Psoas muscle (tissue), 8 donors: ENCODE measurements at regions of chr6 and their contacts with region 1.

Region 1: DNA sequence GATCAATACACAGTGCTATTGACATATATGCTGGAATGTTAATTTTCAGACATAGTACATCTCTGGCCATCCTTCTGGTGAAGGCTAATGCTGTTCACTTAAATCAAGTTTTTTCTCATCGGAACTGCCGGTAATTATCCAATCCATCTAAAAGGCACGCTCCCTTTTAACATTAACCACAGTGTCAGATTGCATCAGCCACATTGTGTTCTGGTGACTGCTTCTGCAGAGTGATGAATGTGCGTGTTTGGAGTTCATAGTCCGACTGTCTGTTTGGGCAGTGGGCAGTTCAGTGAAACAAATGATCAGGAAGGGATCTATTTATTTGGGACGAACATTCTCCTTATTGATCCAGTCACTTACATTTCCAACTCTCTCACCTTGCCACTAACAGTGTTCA is 49.5 kb downstream of the SOBP start:
- DNase-seq: no peak
- ATAC-seq: peak; percentile 66 to 85 (median 75)
- H3K4me3 ChIP-seq: peak overlapping the region; percentile 28
- H3K27ac ChIP-seq: peak overlapping the region; percentile 53
- H3K4me1 ChIP-seq: peaks cover 59% of the 10 kb centered on the region
- H3K27me3 ChIP-seq: no peaks in the 10 kb centered on the region
- CTCF ChIP-seq: no peak

Region 2: DNA sequence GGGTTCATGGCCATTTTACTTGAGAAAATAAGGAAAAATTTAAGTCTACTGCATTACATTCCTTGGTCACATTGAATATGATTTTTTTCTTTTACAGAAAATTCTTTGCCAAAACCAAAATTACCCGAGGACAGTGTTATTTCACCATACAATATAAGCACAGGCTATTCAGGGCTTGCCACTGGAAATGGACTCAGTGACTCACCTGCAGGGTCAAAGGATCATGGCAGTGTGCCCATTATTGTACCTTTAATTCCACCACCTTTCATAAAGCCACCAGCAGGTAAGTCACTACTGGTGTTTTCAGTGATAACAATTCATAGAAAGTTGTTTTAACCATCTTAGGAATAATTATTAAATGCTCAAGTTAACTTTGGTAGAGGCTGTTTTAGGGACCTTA is 33.3 kb before region 1 on chr6:
- intact Hi-C with region 1: loop called in 1 of 2 experiments (anchors 2 kb)
- DNase-seq: no peak
- ATAC-seq: no peak
- H3K4me3 ChIP-seq: no peak overlapping the region
- H3K27ac ChIP-seq: no peak overlapping the region
- H3K4me1 ChIP-seq: peaks cover 11% of the 10 kb centered on the region
- H3K27me3 ChIP-seq: no peaks in the 10 kb centered on the region
- CTCF ChIP-seq: no peak

Region 3: DNA sequence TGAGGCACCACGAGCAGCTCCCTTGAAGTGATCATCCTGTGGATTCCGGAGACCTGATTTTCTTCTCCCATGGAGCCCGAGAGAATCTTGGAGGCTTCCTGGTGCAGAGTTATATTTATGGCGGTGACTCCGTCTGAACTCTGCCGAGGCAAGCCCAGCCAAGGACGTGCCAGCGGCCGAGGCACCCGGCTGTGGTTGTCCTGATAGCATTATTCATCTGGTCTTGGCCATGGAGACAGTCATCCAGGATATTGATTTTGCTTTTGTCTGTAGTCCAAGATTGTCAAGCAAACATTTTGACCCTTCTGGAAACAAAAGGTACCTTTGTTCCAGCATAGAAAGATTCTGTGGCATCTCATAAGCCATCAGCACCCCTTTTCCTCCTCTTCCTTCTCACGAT is 121.4 kb after region 1 on chr6:
- intact Hi-C with region 1: loop called in 1 of 2 experiments (anchors 5 kb)
- DNase-seq: peak; percentile 55 to 73
- ATAC-seq: peak; percentile 79 to 87 (median 85)
- H3K4me3 ChIP-seq: no peak overlapping the region
- H3K27ac ChIP-seq: peak overlapping the region; percentile 64
- H3K4me1 ChIP-seq: peaks cover 75% of the 10 kb centered on the region
- H3K27me3 ChIP-seq: no peaks in the 10 kb centered on the region
- CTCF ChIP-seq: no peak